Naive thymus-derived CD4-positive, alpha-beta T cell (primary cell): ENCODE measurements at regions of chr1 and their contacts with region 1.

Region 1: GRCh38 chr1:244801246-244801645 is 34.2 kb upstream of the COX20 start:
- DNase-seq: peak; percentile 14 to 63 (median 45)
- ATAC-seq: peak; percentile 86
- H3K4me3 ChIP-seq: no peak overlapping the region
- H3K4me3 Mint-ChIP-seq: peak overlapping the region in 4 of 10 donors; percentile 32 to 47 (median 40)
- H3K27ac ChIP-seq: no peak overlapping the region
- H3K27ac Mint-ChIP-seq: peak overlapping the region in 2 of 9 donors; percentile 36 to 77
- H3K4me1 ChIP-seq: no peaks in the 10 kb centered on the region
- H3K4me1 Mint-ChIP-seq: peaks cover 0 to 5% (median 3%) of the 10 kb centered on the region in 7 donors
- H3K27me3 ChIP-seq: no peaks in the 10 kb centered on the region
- H3K27me3 Mint-ChIP-seq: peaks cover 0 to 4% (median 0%) of the 10 kb centered on the region in 5 donors

Region 2: GRCh38 chr1:244272471-244273261 is 528.6 kb before region 1 on chr1:
- CTCF ChIA-PET with region 1: no interaction called
- POLR2A ChIA-PET with region 1: no interaction called
- intact Hi-C with region 1: no loop called
- DNase-seq: peak; percentile 42 to 80 (median 73)
- ATAC-seq: peak; percentile 98
- H3K4me3 ChIP-seq: no peak overlapping the region
- H3K4me3 Mint-ChIP-seq: no peak overlapping the region
- H3K27ac ChIP-seq: no peak overlapping the region
- H3K27ac Mint-ChIP-seq: peak overlapping the region in 3 of 9 donors; percentile 0 to 45 (median 37)
- H3K4me1 ChIP-seq: no peaks in the 10 kb centered on the region
- H3K4me1 Mint-ChIP-seq: peaks cover 3 to 17% (median 12%) of the 10 kb centered on the region in 7 donors
- H3K27me3 ChIP-seq: no peaks in the 10 kb centered on the region
- H3K27me3 Mint-ChIP-seq: peaks cover 0 to 1% (median 0%) of the 10 kb centered on the region in 5 donors

Region 3: DNA sequence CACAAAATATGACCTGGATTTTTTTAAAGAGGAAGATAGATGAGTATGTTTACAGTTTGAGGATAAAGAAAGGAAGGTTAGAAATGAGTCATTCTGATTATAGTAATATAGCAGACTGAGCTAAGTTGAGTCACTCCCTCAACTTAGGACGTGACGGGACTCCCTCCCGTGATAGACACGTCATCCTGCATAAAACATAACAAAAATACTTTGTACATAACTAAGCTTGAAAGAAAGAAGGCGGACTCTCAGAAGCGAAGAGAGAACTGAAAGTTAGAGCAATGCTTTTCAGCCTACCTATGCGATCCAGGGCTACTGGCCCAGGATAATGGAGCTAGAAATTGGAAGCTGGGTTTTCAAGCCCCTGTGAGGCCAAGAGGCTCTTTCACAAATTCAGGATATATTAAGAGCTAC is 201.3 kb before region 1 on chr1:
- CTCF ChIA-PET with region 1: interaction called, 78 read pairs
- POLR2A ChIA-PET with region 1: interaction called, 3 read pairs
- intact Hi-C with region 1: loop called (anchors 1 kb)
- DNase-seq: peak in 5 of 9 donors; percentile 7 to 47 (median 14)
- ATAC-seq: peak; percentile 86
- H3K4me3 ChIP-seq: no peak overlapping the region
- H3K4me3 Mint-ChIP-seq: peak overlapping the region in 3 of 10 donors; percentile 30 to 67 (median 64)
- H3K27ac ChIP-seq: no peak overlapping the region
- H3K27ac Mint-ChIP-seq: peak overlapping the region in 5 of 9 donors; percentile 57 to 90 (median 89)
- H3K4me1 ChIP-seq: no peaks in the 10 kb centered on the region
- H3K4me1 Mint-ChIP-seq: peaks cover 0 to 16% (median 0%) of the 10 kb centered on the region in 7 donors
- H3K27me3 ChIP-seq: no peaks in the 10 kb centered on the region
- H3K27me3 Mint-ChIP-seq: peaks cover 0 to 7% (median 0%) of the 10 kb centered on the region in 5 donors

Region 4: GRCh38 chr1:244864253-244865027 is 63.2 kb after region 1 on chr1 and contains the start of gene HNRNPU:
- CTCF ChIA-PET with region 1: interaction called, 10 read pairs
- POLR2A ChIA-PET with region 1: interaction called, 9 read pairs
- intact Hi-C with region 1: loop called (anchors 1 kb)
- DNase-seq: peak; percentile 93 to 99 (median 98)
- ATAC-seq: peak; percentile 81
- H3K4me3 ChIP-seq: peak within 1 kb of the TSS; percentile 78
- H3K4me3 Mint-ChIP-seq: peak within 1 kb of the TSS; percentile 86 to 98 (median 98)
- H3K27ac ChIP-seq: peak within 1 kb of the TSS; percentile 100
- H3K27ac Mint-ChIP-seq: peak within 1 kb of the TSS; percentile 93 to 100 (median 98)
- H3K4me1 ChIP-seq: peaks cover 23 to 25% of the 10 kb centered on the region in 2 donors
- H3K4me1 Mint-ChIP-seq: peaks cover 39 to 56% (median 51%) of the 10 kb centered on the region in 7 donors
- H3K27me3 ChIP-seq: no peaks in the 10 kb centered on the region
- H3K27me3 Mint-ChIP-seq: peaks cover 0 to 3% (median 0%) of the 10 kb centered on the region in 5 donors
- total RNA-seq, gene HNRNPU: 378 to 509 (median 428) TPM

Region 5: DNA sequence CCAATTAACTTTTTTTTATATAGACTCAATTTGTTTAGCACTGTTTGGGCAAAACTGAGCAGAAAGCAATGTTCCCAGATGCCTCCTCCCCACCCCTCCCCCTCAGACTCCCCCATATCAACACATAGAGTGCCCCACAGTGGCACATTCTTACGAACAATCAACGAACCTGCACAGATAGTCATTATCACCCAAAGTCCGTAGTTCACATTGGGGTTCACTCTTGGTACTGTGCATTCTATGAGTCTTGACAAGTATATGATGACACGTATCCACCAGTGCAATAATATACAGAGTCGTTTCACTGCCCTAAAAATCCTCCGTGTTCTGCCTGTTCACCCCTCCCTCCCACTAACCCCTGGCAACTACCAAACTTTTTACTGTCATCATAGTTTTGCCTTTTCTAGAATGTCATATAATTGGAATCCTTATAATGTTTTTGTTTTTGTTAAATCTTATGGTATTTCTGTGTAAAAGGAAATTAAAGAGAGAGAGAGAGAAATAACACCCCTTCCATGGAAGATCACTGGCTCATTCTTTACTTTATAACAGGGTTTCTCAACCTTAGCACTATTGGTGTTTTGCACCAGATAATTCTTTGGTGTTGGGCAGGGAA is 100.3 kb after region 1 on chr1:
- CTCF ChIA-PET with region 1: no interaction called
- POLR2A ChIA-PET with region 1: no interaction called
- intact Hi-C with region 1: loop called in 1 of 2 experiments (anchors 1 kb)
- DNase-seq: no peak
- ATAC-seq: no peak
- H3K4me3 ChIP-seq: no peak overlapping the region
- H3K4me3 Mint-ChIP-seq: no peak overlapping the region
- H3K27ac ChIP-seq: no peak overlapping the region
- H3K27ac Mint-ChIP-seq: peak overlapping the region in 1 of 9 donors; percentile 24
- H3K4me1 ChIP-seq: no peaks in the 10 kb centered on the region
- H3K4me1 Mint-ChIP-seq: peaks cover 0 to 7% (median 0%) of the 10 kb centered on the region in 7 donors
- H3K27me3 ChIP-seq: no peaks in the 10 kb centered on the region
- H3K27me3 Mint-ChIP-seq: no peaks in the 10 kb centered on the region

Region 6: DNA sequence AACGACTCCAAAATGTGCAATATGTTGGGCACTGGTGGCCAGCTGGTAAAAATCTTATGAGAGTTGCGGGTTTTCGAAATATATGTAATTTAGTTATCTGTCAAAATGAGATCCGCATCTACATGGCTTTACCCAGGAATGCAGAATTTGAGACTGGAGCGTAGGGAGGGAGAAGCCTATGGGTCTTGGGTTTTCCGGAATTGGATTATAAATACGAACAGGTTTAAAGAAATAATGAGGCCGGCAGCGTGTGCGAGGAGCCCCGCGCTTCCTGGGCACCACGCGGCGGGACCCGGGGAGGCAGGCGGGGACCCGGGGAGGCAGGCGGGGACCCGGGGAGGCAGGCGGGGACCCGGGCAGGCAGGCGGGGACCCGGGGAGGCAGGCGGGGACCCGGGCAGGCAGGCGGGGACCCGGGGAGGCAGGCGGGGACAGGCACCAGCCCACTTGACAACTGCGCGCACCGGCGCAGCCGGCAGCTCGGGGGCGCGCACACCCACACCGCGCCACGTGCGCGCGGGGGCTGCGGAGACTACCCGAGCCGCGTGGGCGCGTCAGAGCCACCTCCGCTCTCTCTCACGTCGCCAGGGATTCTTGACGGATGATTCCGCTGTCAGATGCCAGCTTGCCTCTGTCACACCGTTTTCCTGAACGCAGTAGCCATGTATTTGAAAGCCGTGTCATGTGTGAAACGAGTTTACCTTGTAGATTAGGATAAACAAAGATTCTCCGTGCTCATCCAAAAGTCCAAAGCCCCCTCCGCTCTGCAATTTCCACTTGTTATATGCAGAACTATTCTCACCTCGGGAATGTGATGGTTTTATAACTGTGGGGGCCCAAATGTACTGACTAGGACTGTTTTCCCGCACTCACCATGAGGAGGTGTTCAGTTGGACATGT is 117.4 kb after region 1 on chr1:
- CTCF ChIA-PET with region 1: interaction called, 3 read pairs
- POLR2A ChIA-PET with region 1: no interaction called
- intact Hi-C with region 1: loop called in 1 of 2 experiments (anchors 5 kb)
- DNase-seq: peak; percentile 66 to 85 (median 79)
- ATAC-seq: peak; percentile 98
- H3K4me3 ChIP-seq: peak overlapping the region; percentile 62
- H3K4me3 Mint-ChIP-seq: peak overlapping the region; percentile 88 to 96 (median 92)
- H3K27ac ChIP-seq: peak overlapping the region; percentile 56
- H3K27ac Mint-ChIP-seq: peak overlapping the region in 8 of 9 donors; percentile 73 to 96 (median 90)
- H3K4me1 ChIP-seq: peaks cover 6 to 7% of the 10 kb centered on the region in 2 donors
- H3K4me1 Mint-ChIP-seq: peaks cover 0 to 15% (median 10%) of the 10 kb centered on the region in 7 donors
- H3K27me3 ChIP-seq: no peaks in the 10 kb centered on the region
- H3K27me3 Mint-ChIP-seq: peaks cover 0 to 33% (median 0%) of the 10 kb centered on the region in 5 donors

Region 7: DNA sequence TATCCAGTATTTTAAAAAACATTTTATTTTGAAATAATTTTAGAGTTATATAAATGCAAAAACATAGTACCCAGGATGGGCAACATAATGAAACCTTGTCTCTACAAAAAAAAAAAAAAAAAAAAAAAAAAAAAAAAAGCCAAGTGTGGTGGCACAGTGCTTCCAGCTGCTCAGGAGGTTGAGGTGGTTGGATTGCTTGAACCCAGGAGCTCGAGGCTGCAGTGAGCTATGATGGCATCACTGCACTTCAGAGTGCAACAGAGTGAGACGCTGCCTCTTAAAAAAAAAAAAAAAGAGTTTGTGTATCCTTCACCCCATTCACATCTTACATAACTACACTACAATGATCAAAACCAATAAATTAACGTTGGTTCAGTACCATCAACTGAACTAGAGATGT is 237.9 kb after region 1 on chr1:
- CTCF ChIA-PET with region 1: interaction called, 55 read pairs
- POLR2A ChIA-PET with region 1: interaction called, 17 read pairs
- intact Hi-C with region 1: loop called (anchors 1 kb)
- DNase-seq: no peak
- ATAC-seq: no peak
- H3K4me3 ChIP-seq: no peak overlapping the region
- H3K4me3 Mint-ChIP-seq: no peak overlapping the region
- H3K27ac ChIP-seq: no peak overlapping the region
- H3K27ac Mint-ChIP-seq: no peak overlapping the region
- H3K4me1 ChIP-seq: no peaks in the 10 kb centered on the region
- H3K4me1 Mint-ChIP-seq: peaks cover 0 to 5% (median 0%) of the 10 kb centered on the region in 7 donors
- H3K27me3 ChIP-seq: no peaks in the 10 kb centered on the region
- H3K27me3 Mint-ChIP-seq: no peaks in the 10 kb centered on the region

Region 8: DNA sequence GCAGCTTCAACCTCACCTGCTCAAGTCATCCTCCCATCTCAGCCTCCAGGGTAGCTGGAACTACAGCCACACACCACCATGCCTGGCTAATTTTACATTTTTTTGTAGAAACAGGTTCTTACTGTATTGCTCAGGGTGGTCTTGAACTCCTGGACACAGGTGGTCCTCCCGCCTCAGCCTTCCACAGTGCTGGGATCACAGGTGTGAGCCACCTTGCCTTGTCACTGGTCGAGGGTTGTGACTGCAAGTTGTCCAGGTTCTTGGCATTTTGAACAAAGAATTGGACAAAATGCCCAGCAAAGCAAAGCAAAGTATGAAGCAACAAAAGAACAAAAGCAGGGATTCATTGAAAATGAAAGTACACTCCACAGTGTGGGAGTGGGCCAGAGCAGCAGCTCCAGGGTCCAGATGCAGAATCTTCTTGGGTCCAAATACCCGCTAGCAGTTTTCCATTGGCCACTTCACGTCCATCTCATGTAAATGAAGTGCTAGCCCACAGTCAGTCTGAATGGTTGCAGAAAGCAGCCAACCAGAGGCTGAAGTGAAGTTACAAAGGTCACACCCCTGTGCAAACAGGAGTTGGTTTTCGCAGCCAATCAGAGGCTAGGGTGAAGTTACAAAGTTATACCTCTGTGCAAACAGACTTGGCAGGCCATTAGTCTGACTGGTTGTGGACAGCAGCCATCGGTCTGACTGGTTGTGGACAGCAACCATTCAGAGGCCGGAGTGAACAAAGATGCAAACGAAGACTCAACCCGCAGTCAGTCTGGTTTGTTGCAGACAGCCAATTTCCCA is 244.0 kb after region 1 on chr1:
- CTCF ChIA-PET with region 1: interaction called, 55 read pairs
- POLR2A ChIA-PET with region 1: interaction called, 17 read pairs
- intact Hi-C with region 1: loop called (anchors 1 kb)
- DNase-seq: no peak
- ATAC-seq: no peak
- H3K4me3 ChIP-seq: no peak overlapping the region
- H3K4me3 Mint-ChIP-seq: no peak overlapping the region
- H3K27ac ChIP-seq: no peak overlapping the region
- H3K27ac Mint-ChIP-seq: no peak overlapping the region
- H3K4me1 ChIP-seq: no peaks in the 10 kb centered on the region
- H3K4me1 Mint-ChIP-seq: peaks cover 0 to 6% (median 0%) of the 10 kb centered on the region in 7 donors
- H3K27me3 ChIP-seq: no peaks in the 10 kb centered on the region
- H3K27me3 Mint-ChIP-seq: peaks cover 0 to 2% (median 0%) of the 10 kb centered on the region in 5 donors